Upper lobe of right lung (tissue), 1 donor: ENCODE measurements at regions of chr2 and their contacts with region 1.

Region 1: DNA sequence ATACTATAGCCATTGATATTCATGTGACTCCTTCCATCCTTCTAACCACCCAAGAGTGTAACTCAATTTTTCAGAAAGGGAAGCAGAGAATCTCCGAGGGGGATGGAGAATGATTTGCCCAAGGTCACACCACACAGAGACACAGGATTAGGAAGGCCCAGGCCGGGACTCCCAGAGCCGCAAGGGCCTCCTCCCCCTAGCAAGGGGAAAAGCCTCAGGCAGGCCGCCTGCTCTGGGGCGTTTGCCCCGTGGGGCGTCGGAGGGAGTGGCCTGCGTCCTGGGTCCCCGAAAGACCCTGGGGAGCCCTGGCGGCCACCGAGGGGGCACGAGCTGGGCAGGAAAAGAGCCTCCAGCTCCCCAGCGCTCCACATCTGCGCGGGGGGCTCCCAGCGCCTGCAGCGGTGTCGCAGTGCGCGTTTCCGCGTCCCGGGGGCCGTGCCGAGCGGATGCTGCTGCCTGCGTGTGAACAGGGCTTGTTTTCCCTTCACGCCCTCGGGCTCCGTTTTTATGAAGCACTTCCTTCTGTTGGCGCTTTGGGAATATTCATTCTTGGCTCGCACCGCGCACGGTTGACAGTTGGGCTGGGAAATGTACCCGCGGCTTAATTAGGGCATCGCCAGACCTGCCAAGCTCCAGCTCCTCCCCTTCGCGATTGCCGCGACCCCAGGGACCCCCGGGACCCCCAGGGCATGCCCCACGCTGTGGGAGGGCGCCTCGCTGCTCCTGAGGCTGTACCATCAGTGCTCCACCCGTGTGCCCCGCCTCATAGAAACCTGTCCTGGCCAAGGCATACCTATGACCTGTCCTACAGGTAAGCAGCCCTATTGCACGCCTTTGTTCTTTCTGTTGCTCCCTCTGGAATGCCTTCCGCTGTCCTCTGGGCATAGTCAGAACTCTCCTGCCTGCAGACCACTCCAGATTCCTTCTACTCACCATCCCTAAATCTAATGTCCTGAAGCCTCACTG is 158.9 kb upstream of the GLI2 start:
- DNase-seq: no peak
- ATAC-seq: peak; percentile 52
- H3K4me3 ChIP-seq: peak overlapping the region; percentile 23
- H3K27ac ChIP-seq: no peak overlapping the region
- H3K4me1 ChIP-seq: peaks cover 5% of the 10 kb centered on the region
- H3K27me3 ChIP-seq: peaks cover 11% of the 10 kb centered on the region
- CTCF ChIP-seq: no peak

Region 2: GRCh38 chr2:120252225-120253021 is 324.4 kb before region 1 on chr2 and contains the start of gene RALB:
- intact Hi-C with region 1: no loop called
- DNase-seq: peak; percentile 100
- ATAC-seq: peak; percentile 95
- H3K4me3 ChIP-seq: peak within 1 kb of the TSS; percentile 79
- H3K27ac ChIP-seq: peak within 1 kb of the TSS; percentile 91
- H3K4me1 ChIP-seq: peaks cover 38% of the 10 kb centered on the region
- H3K27me3 ChIP-seq: no peaks in the 10 kb centered on the region
- CTCF ChIP-seq: no peak
- total RNA-seq, gene RALB: 65.9 TPM

Region 3: GRCh38 chr2:120680136-120680761 is 103.5 kb after region 1 on chr2:
- intact Hi-C with region 1: loop called (anchors 10 kb)
- DNase-seq: peak; percentile 82
- ATAC-seq: peak; percentile 90
- H3K4me3 ChIP-seq: no peak overlapping the region
- H3K27ac ChIP-seq: no peak overlapping the region
- H3K4me1 ChIP-seq: no peaks in the 10 kb centered on the region
- H3K27me3 ChIP-seq: peaks cover 14% of the 10 kb centered on the region
- CTCF ChIP-seq: peak; percentile 44

Region 4: DNA sequence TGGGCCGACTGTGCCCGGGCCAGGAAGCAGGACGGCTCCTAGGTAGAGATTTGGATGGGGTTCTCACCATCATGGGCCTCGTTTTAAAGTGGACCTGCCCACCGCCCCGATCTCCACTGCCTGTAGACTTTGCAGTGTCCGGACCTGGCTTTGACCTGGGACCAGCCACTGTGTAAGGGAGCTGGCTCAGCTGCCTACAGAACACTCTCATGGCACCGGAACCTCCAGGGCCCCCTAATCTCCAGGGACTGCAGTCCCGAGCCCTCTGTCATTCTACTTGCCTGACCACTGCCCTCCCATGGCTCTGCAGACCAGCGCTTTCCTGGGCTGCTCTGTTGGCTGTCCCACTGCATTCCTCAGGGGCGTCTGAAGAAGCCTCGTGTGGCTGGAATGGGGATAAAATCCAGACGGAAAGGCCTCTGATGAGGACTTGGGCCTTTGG is 279.6 kb after region 1 on chr2:
- intact Hi-C with region 1: no loop called
- DNase-seq: peak; percentile 49
- ATAC-seq: peak; percentile 24
- H3K4me3 ChIP-seq: no peak overlapping the region
- H3K27ac ChIP-seq: no peak overlapping the region
- H3K4me1 ChIP-seq: no peaks in the 10 kb centered on the region
- H3K27me3 ChIP-seq: no peaks in the 10 kb centered on the region
- CTCF ChIP-seq: peak; percentile 24